ENCODE measurements at regions of chr2 and their contacts with region 1.

Region 1: DNA sequence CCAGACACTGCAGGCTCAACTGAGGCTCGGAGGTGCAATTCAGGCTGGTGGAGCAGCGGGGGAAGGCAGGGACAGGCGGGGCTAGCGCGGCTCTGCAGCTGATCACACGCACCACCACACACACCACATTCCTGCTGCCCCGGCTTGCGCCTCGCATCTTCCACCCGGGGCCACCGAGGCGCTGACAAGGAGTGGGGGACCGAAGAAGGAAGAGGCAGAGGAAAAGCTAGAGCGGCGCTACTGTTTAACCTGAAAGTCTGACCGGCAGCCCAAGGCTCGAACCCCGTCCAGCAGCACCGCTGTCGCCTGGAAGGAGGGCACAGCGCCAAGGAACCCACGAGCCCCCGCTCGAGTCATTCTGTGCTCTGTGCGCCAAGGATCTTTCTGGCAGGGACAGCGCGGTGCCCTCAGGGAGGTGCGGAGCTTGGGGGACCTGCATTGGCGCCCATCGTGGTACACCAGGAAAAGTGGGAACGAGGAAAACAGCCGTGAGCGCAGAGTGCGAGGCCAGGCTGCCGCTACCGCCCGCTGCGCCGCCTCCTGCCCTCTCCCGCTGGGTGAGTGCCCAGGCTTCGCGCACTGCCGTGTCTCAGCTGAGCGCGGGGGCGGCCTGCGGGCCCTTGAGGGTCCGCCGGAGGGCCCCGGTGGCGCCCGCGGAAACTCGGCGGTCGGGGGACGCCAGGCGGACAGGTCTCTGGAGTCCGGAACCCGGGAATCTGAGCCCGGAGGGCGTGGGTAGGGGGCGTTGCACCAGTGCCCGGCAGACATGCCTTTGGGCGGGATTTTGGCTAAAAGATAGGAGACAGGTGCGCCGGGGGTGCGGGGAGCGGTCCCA is 860 bp upstream of the KCNJ3 start:
- DNase-seq: peak; percentile 37 to 77 (median 76)
- ATAC-seq: peak; percentile 72 to 84
- H3K4me3 ChIP-seq: peak overlapping the region; percentile 68
- H3K27ac ChIP-seq: peak overlapping the region; percentile 70
- H3K4me1 ChIP-seq: no peaks in the 10 kb centered on the region
- H3K27me3 ChIP-seq: no peaks in the 10 kb centered on the region

Region 2: GRCh38 chr2:154452906-154453493 is 244.6 kb before region 1 on chr2:
- intact Hi-C with region 1: loop called in 1 of 4 experiments (anchors 10 kb)
- DNase-seq: no peak
- ATAC-seq: peak in 1 of 2 donors; percentile 11
- H3K4me3 ChIP-seq: no peak overlapping the region
- H3K27ac ChIP-seq: no peak overlapping the region
- H3K4me1 ChIP-seq: peaks cover 2% of the 10 kb centered on the region
- H3K27me3 ChIP-seq: no peaks in the 10 kb centered on the region

Region 3: GRCh38 chr2:154568413-154568812 is 129.2 kb before region 1 on chr2:
- intact Hi-C with region 1: no loop called
- DNase-seq: no peak
- ATAC-seq: no peak
- H3K4me3 ChIP-seq: no peak overlapping the region
- H3K27ac ChIP-seq: no peak overlapping the region
- H3K4me1 ChIP-seq: no peaks in the 10 kb centered on the region
- H3K27me3 ChIP-seq: no peaks in the 10 kb centered on the region

Region 4: DNA sequence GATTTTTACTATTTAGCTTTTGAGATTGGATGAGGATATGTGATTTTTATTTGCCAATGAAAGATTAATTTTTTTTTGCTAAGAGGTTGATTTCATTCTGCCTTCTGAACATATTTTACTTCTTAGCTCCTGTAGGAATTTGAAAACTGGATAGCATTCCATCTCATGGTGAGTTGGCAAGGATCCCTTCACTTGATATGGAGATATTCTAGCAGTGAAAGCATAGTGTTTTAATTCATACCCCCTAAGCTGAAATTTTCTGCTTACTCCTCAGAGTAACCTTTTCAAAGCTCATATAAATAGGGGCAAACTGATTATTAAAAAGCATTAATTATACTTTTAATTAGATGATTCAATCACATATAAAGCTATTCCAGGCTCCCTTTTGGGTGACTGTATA is 60.2 kb before region 1 on chr2:
- intact Hi-C with region 1: loop called in 1 of 4 experiments (anchors 5 kb)
- DNase-seq: no peak
- ATAC-seq: no peak
- H3K4me3 ChIP-seq: no peak overlapping the region
- H3K27ac ChIP-seq: no peak overlapping the region
- H3K4me1 ChIP-seq: no peaks in the 10 kb centered on the region
- H3K27me3 ChIP-seq: no peaks in the 10 kb centered on the region

Region 5: DNA sequence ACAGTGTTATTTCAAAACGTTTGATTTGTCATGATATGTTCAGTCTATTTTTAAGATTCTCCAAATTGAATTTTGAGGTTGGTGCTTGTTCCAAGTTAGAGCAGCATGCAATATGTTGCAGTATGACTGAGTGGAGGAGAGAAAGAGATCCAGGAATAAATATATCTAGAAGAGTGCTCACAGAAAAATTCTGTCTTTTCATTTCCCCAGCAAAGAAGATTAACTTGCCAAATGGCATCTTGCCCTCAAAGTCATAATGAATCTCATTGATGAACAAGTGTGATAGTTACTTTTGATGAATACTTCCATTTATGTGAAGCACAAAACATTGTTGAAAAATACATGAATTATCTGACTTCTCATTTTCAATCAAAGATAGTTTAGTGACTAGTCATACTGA is 96.8 kb after region 1 on chr2:
- intact Hi-C with region 1: no loop called
- DNase-seq: no peak
- ATAC-seq: no peak
- H3K4me3 ChIP-seq: no peak overlapping the region
- H3K27ac ChIP-seq: no peak overlapping the region
- H3K4me1 ChIP-seq: no peaks in the 10 kb centered on the region
- H3K27me3 ChIP-seq: no peaks in the 10 kb centered on the region